GM12878 (cell line): ENCODE measurements at regions of chr6 and their contacts with region 1.

Region 1: DNA sequence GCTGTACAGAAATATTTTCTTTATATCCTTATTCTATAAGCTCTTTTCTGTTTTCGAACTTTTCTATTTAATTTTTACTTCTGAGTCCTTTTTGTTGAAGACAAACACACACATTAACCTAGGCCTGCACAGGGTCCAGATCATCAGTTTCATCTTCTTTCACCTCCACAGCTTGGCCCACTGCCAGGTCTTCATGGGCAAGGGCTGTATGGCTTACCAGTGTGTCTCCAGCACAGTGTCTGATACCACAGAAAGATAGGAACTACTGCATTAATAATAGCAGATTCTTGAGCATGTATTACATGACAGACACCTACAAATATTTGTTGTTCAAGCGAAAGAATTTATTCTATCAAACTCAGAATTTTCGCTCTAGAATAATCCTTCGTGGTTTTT is 24.4 kb downstream of the QKI start:
- DNase-seq: no peak
- ATAC-seq: peak; percentile 73
- H3K4me3 ChIP-seq: no peak overlapping the region
- H3K27ac ChIP-seq: no peak overlapping the region
- H3K4me1 ChIP-seq: peaks cover 5% of the 10 kb centered on the region; the same call in 1 of the 2 replicates
- H3K27me3 ChIP-seq: no peaks in the 10 kb centered on the region
- CTCF ChIP-seq: no peak
- EP300 ChIP-seq: no peak
- POLR2A ChIP-seq: no peak
- RAD21 ChIP-seq: no peak

Region 2: GRCh38 chr6:162684961-162685360 is 754.0 kb before region 1 on chr6:
- CTCF ChIA-PET with region 1: no interaction called
- POLR2A ChIA-PET with region 1: no interaction called
- RAD21 ChIA-PET with region 1: no interaction called
- SMC1A ChIA-PET with region 1: no interaction called
- in situ Hi-C with region 1: no loop called
- intact Hi-C with region 1: no loop called
- DNase-seq: no peak
- ATAC-seq: no peak
- H3K4me3 ChIP-seq: no peak overlapping the region
- H3K27ac ChIP-seq: no peak overlapping the region
- H3K4me1 ChIP-seq: no peaks in the 10 kb centered on the region
- H3K27me3 ChIP-seq: no peaks in the 10 kb centered on the region
- CTCF ChIP-seq: no peak
- EP300 ChIP-seq: no peak
- POLR2A ChIP-seq: no peak
- RAD21 ChIP-seq: no peak

Region 3: DNA sequence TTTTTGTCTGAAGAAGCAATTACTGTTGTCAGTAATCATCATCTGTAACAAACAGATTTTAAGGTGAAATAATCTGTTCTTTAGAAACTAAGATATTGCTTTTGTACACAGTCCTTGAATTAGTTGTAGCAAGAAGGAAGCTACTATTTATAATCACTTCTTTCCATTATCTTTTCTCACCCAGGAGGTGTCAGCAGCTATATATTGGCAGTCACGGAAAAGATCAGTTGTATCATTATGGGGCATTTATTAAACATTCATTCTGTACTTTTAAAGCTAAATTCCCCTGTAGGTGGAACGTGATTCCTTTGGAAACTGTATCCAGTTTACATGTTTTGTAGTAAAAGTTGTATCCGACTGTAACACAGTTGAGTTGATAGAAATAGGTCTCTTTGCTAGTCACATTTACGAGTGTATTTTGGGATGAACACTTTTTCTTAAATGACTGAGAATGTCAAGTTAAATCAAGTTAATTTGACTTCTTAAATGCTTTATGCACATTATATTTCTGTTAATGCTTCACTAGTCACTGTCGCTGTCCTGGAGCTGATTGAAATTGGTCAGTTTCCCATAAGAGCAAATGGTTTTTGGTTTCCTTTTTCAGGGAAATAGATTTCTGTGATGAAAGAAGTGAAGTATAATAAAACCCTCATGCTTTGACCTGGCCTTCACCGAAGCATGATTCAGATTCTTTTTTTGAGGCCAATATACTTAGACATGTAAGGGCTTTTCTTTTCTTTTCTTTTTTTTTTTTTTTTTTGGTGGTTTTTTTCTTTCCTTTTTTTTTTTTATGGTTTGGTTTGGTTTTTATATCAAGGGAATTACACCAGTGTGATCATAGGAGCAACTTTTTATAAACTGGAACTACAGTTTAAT is 19.3 kb before region 1 on chr6:
- CTCF ChIA-PET with region 1: interaction called, 10 read pairs
- POLR2A ChIA-PET with region 1: interaction called, 4 read pairs
- RAD21 ChIA-PET with region 1: interaction called, 3 read pairs
- SMC1A ChIA-PET with region 1: interaction called, 34 read pairs
- in situ Hi-C with region 1: no loop called
- intact Hi-C with region 1: no loop called
- DNase-seq: no peak
- ATAC-seq: peak; percentile 7; the same call in 1 of the 3 replicates
- H3K4me3 ChIP-seq: peak overlapping the region; percentile 61
- H3K27ac ChIP-seq: no peak overlapping the region
- H3K4me1 ChIP-seq: peaks cover 3% of the 10 kb centered on the region; the same call in 1 of the 2 replicates
- H3K27me3 ChIP-seq: no peaks in the 10 kb centered on the region
- CTCF ChIP-seq: no peak
- EP300 ChIP-seq: no peak
- POLR2A ChIP-seq: no peak
- RAD21 ChIP-seq: no peak

Region 4: DNA sequence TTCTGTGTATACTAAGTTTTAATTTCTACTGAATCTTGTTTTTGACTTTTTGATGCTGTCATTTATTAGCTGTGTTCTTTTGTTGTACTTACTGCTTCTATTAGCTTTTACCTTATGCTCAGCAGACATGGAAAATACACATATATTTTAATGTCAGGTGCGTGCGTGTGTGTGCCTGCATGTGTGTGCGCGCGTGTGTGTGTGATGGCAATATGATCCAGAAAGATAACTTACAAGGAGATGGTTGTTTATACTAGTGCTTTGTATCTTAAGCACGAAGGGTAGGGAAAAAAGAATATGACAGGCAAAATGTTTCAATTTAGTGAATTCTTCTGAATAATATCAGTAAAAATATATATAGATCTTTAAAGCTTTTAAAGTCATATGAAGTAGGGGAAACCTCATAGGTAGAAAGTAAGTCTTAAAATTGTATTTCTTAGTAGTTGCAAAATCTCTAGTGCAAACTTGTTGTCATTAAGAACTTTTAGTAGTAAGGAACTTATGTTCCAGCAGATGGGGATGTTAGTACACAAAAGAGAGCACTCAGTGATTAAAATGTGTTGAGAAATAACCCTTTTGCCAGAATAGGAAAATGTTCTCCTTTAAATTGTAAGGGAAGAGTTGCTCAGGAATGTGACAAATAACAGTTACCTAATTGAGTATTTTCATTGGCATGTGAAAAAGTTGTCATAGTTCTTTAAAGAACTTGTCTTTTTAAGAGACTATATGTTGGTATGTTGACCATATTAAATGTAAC is 11.3 kb before region 1 on chr6:
- CTCF ChIA-PET with region 1: interaction called, 11 read pairs
- POLR2A ChIA-PET with region 1: no interaction called
- RAD21 ChIA-PET with region 1: interaction called, 4 read pairs
- SMC1A ChIA-PET with region 1: interaction called, 4 read pairs
- in situ Hi-C with region 1: no loop called
- intact Hi-C with region 1: no loop called
- DNase-seq: no peak
- ATAC-seq: peak; percentile 45; the same call in 2 of the 3 replicates
- H3K4me3 ChIP-seq: no peak overlapping the region
- H3K27ac ChIP-seq: no peak overlapping the region
- H3K4me1 ChIP-seq: no peaks in the 10 kb centered on the region
- H3K27me3 ChIP-seq: no peaks in the 10 kb centered on the region
- CTCF ChIP-seq: peak in 1 of 3 experiments; percentile 52; a peak in 2 of 6 replicates
- EP300 ChIP-seq: no peak
- POLR2A ChIP-seq: no peak
- RAD21 ChIP-seq: peak; percentile 76

Region 5: GRCh38 chr6:163449076-163449475 is 10.1 kb after region 1 on chr6:
- CTCF ChIA-PET with region 1: interaction called, 7 read pairs
- POLR2A ChIA-PET with region 1: interaction called, 4 read pairs
- RAD21 ChIA-PET with region 1: no interaction called
- SMC1A ChIA-PET with region 1: interaction called, 12 read pairs
- in situ Hi-C with region 1: no loop called
- intact Hi-C with region 1: no loop called
- DNase-seq: no peak
- ATAC-seq: no peak
- H3K4me3 ChIP-seq: no peak overlapping the region
- H3K27ac ChIP-seq: no peak overlapping the region
- H3K4me1 ChIP-seq: no peaks in the 10 kb centered on the region
- H3K27me3 ChIP-seq: no peaks in the 10 kb centered on the region
- CTCF ChIP-seq: no peak
- EP300 ChIP-seq: no peak
- POLR2A ChIP-seq: no peak
- RAD21 ChIP-seq: no peak